PC-3 (cell line): ENCODE measurements at regions of chr6 and their contacts with region 1.

Region 1: DNA sequence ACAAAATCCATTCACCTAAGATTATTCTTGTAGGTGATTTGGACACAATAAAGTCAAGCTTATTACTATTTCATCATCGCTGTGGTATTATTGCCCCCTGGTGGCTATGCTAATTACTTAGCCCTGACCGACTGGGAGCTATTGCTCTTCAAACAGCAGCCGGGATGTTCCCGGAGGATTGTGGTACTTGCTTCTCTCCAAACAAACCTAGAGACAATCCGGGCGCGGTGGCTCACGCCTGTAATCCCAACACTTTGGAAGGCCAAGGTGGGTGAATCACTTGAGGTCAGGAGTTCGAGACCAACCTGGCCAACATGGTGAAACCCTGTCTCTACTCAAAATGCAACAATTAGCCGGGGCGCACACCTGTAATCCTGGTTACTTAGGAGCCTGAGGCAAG is 15.4 kb upstream of the STMND1 start:
- DNase-seq: peak; percentile 93
- ATAC-seq: peak; percentile 96
- H3K4me3 ChIP-seq: no peak overlapping the region
- H3K27ac ChIP-seq: no peak overlapping the region
- H3K4me1 ChIP-seq: no peaks in the 10 kb centered on the region
- H3K27me3 ChIP-seq: no peaks in the 10 kb centered on the region
- CTCF ChIP-seq: peak; percentile 83

Region 2: DNA sequence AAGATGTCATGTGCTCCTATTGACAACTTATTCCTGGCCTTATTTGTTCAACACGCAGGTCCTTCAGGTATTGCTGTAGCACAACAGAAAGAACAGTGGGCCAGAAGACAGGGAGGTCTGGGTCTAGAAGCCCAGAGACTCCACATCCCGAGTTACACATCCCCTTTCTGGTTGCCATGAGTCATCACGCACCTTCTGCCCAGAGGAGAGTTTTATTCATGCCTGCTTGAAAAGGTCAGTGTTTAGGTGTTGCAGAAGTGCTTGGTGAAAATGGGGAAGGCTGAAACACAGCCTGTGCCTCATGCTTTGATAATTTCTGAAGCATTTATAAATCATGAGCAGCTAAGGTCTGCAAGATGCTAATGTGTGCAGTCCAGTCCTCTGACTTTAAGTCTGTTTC is 591.7 kb before region 1 on chr6:
- CTCF ChIA-PET with region 1: no interaction called
- POLR2A ChIA-PET with region 1: no interaction called
- intact Hi-C with region 1: loop called (anchors 10 kb)
- DNase-seq: peak; percentile 53
- ATAC-seq: no peak
- H3K4me3 ChIP-seq: no peak overlapping the region
- H3K27ac ChIP-seq: no peak overlapping the region
- H3K4me1 ChIP-seq: peaks cover 23% of the 10 kb centered on the region
- H3K27me3 ChIP-seq: no peaks in the 10 kb centered on the region
- CTCF ChIP-seq: no peak

Region 3: GRCh38 chr6:16819752-16820151 is 266.7 kb before region 1 on chr6:
- CTCF ChIA-PET with region 1: no interaction called
- POLR2A ChIA-PET with region 1: no interaction called
- intact Hi-C with region 1: loop called (anchors 5 kb)
- DNase-seq: peak; percentile 61
- ATAC-seq: peak; percentile 49; the same call in 1 of the 2 replicates
- H3K4me3 ChIP-seq: no peak overlapping the region
- H3K27ac ChIP-seq: no peak overlapping the region
- H3K4me1 ChIP-seq: 0 out of 2 replicates have a peak, but pooled peaks cover 4% of the 10 kb centered on the region
- H3K27me3 ChIP-seq: no peaks in the 10 kb centered on the region
- CTCF ChIP-seq: peak; percentile 65

Region 4: DNA sequence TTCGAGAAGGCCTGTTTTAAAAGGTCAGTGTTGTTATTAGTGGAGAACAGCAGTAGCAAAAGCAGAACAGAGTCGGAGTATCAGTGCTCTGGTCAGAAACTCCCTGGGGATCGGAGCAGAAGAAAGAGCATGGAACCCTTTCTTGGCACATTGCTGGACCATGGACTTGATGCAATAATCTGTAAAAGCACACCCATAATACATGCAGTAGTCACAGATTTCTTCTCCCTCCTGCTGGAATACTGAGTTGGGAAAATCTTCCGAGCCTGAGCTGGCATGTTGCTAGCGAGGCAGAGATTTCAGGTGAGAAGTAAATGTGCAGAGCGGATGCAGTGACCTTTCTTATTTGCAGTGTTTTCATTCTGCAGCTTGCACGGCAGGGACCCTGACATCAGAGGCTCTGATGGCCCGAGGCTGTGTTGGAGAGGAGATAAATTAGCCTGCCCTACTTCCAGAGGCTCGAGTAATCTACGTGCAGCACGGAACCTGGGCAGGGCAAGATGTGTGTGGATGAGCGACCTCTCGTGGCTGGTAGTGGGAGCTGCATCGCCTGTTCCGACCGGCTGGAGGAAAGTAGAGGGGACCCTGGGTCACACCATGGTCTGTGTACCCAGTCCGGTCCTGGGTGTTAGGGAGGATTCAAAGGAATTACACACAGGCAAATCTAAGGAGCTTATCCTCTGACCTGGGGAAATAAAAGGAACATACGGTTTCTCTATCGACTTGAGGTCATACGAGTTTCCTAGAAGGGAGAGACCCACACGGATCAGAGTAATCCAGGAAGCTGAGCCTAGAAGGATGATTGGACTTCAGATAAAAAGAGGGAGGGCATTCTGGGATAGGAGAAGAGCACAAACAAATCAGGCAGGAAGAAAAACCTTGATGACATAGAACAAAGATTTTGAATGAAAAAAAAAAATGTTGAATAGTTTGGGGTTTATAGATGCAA is 121.6 kb before region 1 on chr6:
- CTCF ChIA-PET with region 1: interaction called, 8 read pairs
- POLR2A ChIA-PET with region 1: no interaction called
- intact Hi-C with region 1: loop called (anchors 1 kb)
- DNase-seq: peak; percentile 79
- ATAC-seq: peak; percentile 94
- H3K4me3 ChIP-seq: peak overlapping the region; percentile 42
- H3K27ac ChIP-seq: no peak overlapping the region
- H3K4me1 ChIP-seq: peaks cover 24% of the 10 kb centered on the region
- H3K27me3 ChIP-seq: no peaks in the 10 kb centered on the region
- CTCF ChIP-seq: peak; percentile 95

Region 5: DNA sequence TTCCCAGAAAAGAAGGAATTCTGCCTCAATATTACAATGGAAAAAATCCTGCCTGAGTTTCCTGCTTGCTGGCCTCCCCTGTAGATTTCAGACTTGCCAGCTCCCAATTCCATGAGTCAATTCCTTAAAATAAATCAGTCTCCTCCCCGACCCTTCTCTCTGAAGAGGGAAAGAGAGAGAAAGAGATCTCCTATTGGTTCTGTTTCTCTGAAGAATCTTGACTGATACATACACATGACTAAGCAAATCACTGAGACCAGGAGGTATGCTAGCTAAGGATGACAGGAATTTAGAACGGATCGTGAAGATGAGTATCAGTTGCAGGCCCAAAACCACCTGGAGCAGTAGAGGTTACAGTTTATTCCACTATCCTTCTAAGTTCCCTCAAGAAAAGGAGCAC is 183.4 kb after region 1 on chr6:
- CTCF ChIA-PET with region 1: no interaction called
- POLR2A ChIA-PET with region 1: no interaction called
- intact Hi-C with region 1: no loop called
- DNase-seq: no peak
- ATAC-seq: no peak
- H3K4me3 ChIP-seq: no peak overlapping the region
- H3K27ac ChIP-seq: no peak overlapping the region
- H3K4me1 ChIP-seq: no peaks in the 10 kb centered on the region
- H3K27me3 ChIP-seq: no peaks in the 10 kb centered on the region
- CTCF ChIP-seq: no peak